ENCODE measurements at regions of chr10 and their contacts with region 1.

Region 1: DNA sequence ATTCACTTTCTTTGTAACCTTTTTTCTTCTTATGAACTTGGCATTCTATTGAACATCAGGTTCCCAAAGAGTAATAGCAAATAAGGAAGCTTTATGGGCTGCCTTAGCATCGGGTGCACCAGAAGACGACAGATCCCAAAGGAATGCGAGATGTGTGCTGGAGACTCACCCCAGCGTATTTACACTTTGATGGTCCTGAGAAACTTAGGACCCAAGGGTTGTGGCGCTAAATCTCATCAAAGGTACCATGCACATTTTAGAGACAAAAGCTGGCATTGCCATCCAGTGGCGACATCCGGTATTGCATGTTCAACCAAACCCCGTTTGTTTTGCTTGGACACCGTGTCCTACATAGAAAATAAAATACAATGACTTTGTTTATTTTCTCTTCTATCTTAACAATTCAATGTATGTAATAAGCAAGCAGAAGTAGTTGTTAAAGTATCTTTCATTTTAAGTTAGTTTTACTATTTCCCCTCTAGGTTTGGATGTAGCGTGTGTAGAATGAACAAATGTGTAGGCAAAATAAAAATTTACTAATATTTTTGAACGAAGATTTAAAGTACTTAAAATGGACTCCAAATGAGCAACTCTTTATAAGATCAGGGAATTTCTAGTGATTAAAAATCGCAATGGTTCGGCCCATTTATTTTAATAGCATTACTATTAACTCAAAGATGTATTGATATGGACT is 1154.8 kb downstream of the GATA3 start:
- DNase-seq: peak; percentile 12 to 88 (median 72)

Region 2: DNA sequence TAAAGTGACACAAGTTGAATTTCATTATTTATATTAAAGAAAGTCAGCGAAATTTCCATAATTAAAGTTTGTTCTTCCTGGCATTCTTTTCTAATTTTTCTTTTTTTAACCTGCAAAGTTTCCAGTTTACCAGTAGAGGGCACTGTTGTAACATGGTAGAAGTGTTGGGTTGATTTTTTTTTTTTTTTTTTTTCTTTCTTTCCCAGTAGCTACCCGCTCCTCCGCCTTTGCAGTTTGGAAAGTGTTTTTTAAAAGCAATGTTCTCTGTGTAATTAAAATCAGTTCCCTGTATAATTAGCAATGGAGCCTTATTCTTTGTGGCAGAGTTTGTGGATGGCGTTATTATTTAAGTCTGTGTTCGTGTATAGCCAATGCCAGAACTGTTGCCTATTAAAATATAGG is 1337.2 kb before region 1 on chr10:
- intact Hi-C with region 1: loop called (anchors 10 kb)
- DNase-seq: peak in 2 of 42 donors; percentile 8 to 43